ENCODE measurements at regions of chr2 and their contacts with region 1.

Region 1: GRCh38 chr2:222915092-222915957 is 54.5 kb downstream of the ACSL3 start:
- DNase-seq: no peak
- H3K4me3 ChIP-seq: no peak overlapping the region
- H3K27ac ChIP-seq: no peak overlapping the region
- H3K4me1 ChIP-seq: peaks cover 6% of the 10 kb centered on the region
- H3K27me3 ChIP-seq: no peaks in the 10 kb centered on the region
- CTCF ChIP-seq: peak; percentile 35 to 42

Region 2: GRCh38 chr2:222959336-222959735 is 44.0 kb after region 1 on chr2:
- CTCF ChIA-PET with region 1: no interaction called
- dilution Hi-C with region 1: no loop called
- in situ Hi-C with region 1: no loop called
- intact Hi-C with region 1: loop called (anchors 5 kb)
- DNase-seq: peak; percentile 83
- H3K4me3 ChIP-seq: no peak overlapping the region
- H3K27ac ChIP-seq: peak overlapping the region; percentile 15
- H3K4me1 ChIP-seq: peaks cover 22% of the 10 kb centered on the region
- H3K27me3 ChIP-seq: no peaks in the 10 kb centered on the region
- CTCF ChIP-seq: peak; percentile 58 to 65

Region 3: DNA sequence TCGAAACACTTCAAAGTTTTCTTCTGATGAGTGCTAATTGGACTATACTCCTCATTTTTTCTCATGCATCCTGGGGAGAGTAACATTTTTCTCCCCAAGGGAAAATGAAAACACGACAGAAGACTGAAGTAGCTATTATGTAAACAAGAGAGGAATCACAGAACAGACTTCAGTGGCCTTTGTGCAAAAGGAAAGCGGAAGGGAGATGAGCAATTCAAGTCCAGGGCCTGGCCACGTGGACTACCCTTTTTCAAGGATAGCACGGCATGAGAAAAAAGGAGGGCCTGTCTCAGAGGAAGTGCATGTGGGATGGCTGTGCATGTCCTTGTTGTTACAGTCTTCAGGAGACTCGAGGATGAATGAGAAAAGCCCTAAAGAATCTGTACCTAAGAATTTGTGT is 92.8 kb after region 1 on chr2:
- CTCF ChIA-PET with region 1: no interaction called
- dilution Hi-C with region 1: no loop called
- in situ Hi-C with region 1: no loop called
- intact Hi-C with region 1: no loop called
- DNase-seq: no peak
- H3K4me3 ChIP-seq: no peak overlapping the region
- H3K27ac ChIP-seq: no peak overlapping the region
- H3K4me1 ChIP-seq: no peaks in the 10 kb centered on the region
- H3K27me3 ChIP-seq: no peaks in the 10 kb centered on the region
- CTCF ChIP-seq: no peak

Measured in mammary epithelial cell (primary cell).